ENCODE measurements at regions of chr6 and their contacts with region 1.

Region 1: DNA sequence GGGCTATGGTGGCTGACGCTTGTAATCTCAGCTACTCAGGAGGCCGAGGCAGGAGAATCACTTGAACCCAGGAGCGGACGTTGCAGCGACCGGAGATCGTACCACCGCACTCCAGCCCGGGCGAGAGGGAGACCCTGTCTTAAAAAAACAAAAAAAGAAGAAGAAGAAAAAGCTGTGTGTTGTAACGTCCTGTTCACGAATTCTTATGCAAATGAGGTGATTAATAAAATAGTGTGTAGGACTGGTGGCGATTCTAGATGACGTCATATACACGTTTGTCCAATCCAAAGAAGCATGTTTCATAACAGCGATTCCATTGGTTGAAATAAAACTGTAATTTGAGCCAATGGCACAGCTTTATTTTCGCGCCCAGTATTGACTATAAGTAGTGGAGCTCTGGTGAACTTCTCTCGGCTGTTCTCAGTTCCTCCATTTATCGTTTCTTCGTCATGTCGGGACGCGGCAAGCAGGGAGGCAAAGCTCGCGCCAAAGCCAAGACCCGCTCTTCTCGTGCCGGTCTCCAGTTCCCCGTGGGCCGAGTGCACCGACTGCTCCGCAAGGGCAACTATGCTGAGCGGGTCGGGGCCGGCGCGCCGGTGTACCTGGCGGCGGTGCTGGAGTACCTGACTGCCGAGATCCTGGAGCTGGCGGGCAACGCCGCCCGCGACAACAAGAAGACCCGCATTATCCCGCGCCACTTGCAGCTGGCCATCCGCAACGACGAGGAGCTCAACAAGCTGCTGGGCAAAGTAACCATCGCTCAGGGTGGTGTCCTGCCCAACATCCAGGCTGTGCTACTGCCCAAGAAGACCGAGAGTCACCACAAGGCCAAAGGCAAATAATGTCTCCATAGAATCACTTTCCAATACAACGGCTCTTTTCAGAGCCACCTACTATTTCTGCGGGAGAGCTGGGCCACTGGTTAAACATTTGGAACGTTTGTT is 47.0 kb downstream of the OR2B2 start:
- DNase-seq: peak; percentile 44 to 77
- ATAC-seq: peak; percentile 86 to 95 (median 94)
- H3K4me3 ChIP-seq: peak overlapping the region; percentile 46 to 83 (median 64)
- H3K27ac ChIP-seq: peak overlapping the region in 7 of 10 donors; percentile 15 to 82 (median 51)
- H3K4me1 ChIP-seq: peaks cover 5 to 42% (median 32%) of the 10 kb centered on the region in 9 donors
- H3K27me3 ChIP-seq: peaks cover 0 to 36% (median 31%) of the 10 kb centered on the region in 7 donors
- CTCF ChIP-seq: no peak

Region 2: GRCh38 chr6:27838058-27838944 is 26.9 kb before region 1 on chr6:
- intact Hi-C with region 1: loop called in 2 of 10 experiments (anchors 1 to 2 kb)
- DNase-seq: peak; percentile 61 to 80
- ATAC-seq: peak; percentile 92 to 96 (median 95)
- H3K4me3 ChIP-seq: peak overlapping the region; percentile 61 to 95 (median 82)
- H3K27ac ChIP-seq: peak overlapping the region; percentile 86 to 98 (median 96)
- H3K4me1 ChIP-seq: peaks cover 0 to 39% (median 31%) of the 10 kb centered on the region in 9 donors
- H3K27me3 ChIP-seq: no peaks in the 10 kb centered on the region
- CTCF ChIP-seq: peak in 2 of 9 donors; percentile 7 to 8

Measured in heart right ventricle (tissue), 16 donors.